A549 (cell line): ENCODE measurements at regions of chr2 and their contacts with region 1.

Region 1: GRCh38 chr2:217713395-217714286 is 289.2 kb downstream of the TNS1 start:
- DNase-seq: peak; percentile 61 to 65
- ATAC-seq: peak; percentile 75 to 92
- H3K4me3 ChIP-seq: no peak overlapping the region
- H3K27ac ChIP-seq: peak overlapping the region; percentile 37 to 73; a peak in 5 of 6 replicates
- H3K4me1 ChIP-seq: peaks cover 6% of the 10 kb centered on the region; the same call in 2 of the 3 replicates
- CTCF ChIP-seq: peak; percentile 92
- EP300 ChIP-seq: no peak
- POLR2A ChIP-seq: no peak
- RAD21 ChIP-seq: peak; percentile 98 to 99

Region 2: DNA sequence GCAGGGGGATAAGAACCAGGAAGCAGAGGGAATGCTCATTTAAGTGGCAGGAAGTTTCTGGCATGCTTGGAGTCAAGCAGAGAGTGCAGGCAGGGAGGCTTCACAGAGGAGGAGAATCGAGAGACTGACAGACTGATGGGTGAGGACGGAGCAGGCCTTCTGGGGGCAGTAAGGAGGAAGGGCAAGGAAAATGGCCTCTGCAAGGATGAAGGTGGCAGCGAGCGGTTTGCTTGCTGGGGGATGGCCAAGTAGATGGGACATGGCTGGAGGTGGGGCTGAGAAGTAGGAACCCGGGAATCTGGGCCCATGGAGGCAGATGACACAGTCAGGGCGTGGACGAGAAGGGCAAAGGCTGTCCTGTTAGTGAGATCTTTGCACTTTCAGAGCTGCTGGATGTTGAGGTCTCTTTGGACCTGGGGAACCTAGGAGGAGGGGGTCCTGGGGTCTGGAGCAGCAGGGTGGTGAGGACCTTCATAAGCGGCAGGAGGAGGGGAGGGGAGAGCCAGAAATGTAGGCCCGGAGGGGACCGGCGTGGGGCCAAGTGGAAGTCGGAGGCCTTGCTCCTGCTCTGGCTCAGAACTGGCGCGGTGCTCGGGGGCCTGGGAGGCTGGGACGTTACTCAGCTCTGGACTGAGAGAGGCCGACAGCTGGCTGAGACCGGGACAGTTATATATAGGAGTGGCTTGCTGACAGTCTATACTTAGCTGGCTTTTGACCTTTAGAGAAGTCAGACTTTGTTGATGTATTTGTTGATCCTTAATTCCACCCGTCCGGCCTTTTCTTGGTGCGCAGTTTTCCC is 1034.2 kb before region 1 on chr2:
- CTCF ChIA-PET with region 1: interaction called, 30 read pairs
- POLR2A ChIA-PET with region 1: no interaction called
- DNase-seq: no peak
- ATAC-seq: no peak
- H3K4me3 ChIP-seq: no peak overlapping the region
- H3K27ac ChIP-seq: no peak overlapping the region
- H3K4me1 ChIP-seq: peaks cover 19% of the 10 kb centered on the region; the same call in 2 of the 3 replicates
- CTCF ChIP-seq: no peak
- EP300 ChIP-seq: no peak
- POLR2A ChIP-seq: no peak
- RAD21 ChIP-seq: no peak

Region 3: GRCh38 chr2:216687646-216688045 is 1026.0 kb before region 1 on chr2:
- CTCF ChIA-PET with region 1: interaction called, 30 read pairs
- POLR2A ChIA-PET with region 1: no interaction called
- DNase-seq: peak; percentile 38 to 47
- ATAC-seq: peak in 1 of 2 experiments; percentile 61; a peak in 3 of 6 replicates
- H3K4me3 ChIP-seq: no peak overlapping the region
- H3K27ac ChIP-seq: no peak overlapping the region
- H3K4me1 ChIP-seq: peaks cover 16% of the 10 kb centered on the region; the same call in 2 of the 3 replicates
- CTCF ChIP-seq: peak; percentile 37; the same call in 2 of the 3 replicates
- EP300 ChIP-seq: no peak
- POLR2A ChIP-seq: no peak
- RAD21 ChIP-seq: peak; percentile 17 to 25; a peak in 1 of 5 replicates

Region 4: DNA sequence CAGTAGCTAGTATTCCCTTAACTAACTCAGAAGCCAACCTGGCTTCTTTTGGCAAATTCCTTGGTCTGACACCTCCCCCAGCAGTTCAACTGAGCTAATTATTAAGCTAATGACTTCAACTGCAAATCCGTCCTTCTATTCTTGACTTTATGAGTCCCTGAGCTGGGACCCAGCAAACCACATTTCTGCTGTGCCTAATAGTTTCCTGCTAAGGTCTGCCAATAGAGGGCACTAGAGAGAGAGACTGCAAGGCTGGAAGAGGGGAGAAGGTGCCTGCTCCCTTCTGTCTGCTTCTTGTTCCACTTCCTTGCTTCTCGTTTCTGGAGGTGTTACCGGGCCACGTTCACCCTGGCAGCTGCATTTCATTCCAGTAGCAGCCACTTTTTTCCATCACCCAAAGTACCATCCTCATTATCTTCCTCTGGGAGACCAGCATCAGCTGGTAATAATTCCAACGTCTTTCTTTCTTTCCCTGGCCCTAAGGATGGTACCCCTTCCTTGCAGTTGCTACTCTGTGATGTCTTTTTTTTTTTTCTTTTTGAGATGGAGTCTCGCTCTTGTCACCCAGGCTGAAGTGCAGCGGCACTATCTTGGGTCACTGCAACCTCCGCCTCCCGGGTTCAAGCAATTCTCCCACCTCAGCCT is 62.8 kb before region 1 on chr2:
- CTCF ChIA-PET with region 1: interaction called, 10 read pairs
- POLR2A ChIA-PET with region 1: no interaction called
- DNase-seq: peak; percentile 48 to 76
- ATAC-seq: peak; percentile 51 to 82; a peak in 4 of 6 replicates
- H3K4me3 ChIP-seq: no peak overlapping the region
- H3K27ac ChIP-seq: no peak overlapping the region; a peak in 1 of 6 replicates
- H3K4me1 ChIP-seq: peaks cover 27% of the 10 kb centered on the region
- CTCF ChIP-seq: peak; percentile 67
- EP300 ChIP-seq: no peak
- POLR2A ChIP-seq: no peak
- RAD21 ChIP-seq: peak; percentile 48 to 65; a peak in 4 of 5 replicates

Region 5: DNA sequence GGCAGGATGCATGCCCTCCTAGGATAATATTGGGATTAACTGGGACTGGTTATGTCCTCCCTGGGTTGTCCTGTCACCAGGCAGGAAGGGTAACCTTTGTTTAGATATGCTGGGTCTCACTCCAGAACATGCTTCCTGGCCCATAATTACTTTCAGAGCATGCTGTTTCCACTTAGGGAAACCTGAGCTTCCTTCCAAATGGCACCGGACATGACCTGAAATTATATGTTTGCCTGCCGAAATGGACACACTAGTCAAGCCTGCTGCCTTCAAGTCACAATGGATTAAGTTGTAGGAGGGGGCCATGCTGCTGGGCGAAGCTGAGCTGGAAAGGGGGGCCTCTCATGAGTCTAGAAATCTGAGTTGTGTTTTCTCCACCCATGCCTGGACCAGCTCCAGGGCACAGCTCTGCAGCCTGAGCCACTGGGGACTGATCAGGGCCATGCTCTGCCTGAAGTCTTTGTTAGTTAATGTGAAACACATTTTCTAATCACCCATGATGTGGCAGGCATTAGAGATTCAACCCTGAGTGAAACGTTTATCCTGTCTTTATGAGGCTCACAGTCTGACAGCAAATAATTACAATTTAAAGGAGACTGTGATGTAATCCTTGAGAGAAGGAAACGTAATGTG is 15.9 kb after region 1 on chr2:
- CTCF ChIA-PET with region 1: interaction called, 14 read pairs
- POLR2A ChIA-PET with region 1: no interaction called
- DNase-seq: no peak
- ATAC-seq: no peak
- H3K4me3 ChIP-seq: no peak overlapping the region
- H3K27ac ChIP-seq: no peak overlapping the region
- H3K4me1 ChIP-seq: no peaks in the 10 kb centered on the region
- CTCF ChIP-seq: no peak
- EP300 ChIP-seq: no peak
- POLR2A ChIP-seq: no peak
- RAD21 ChIP-seq: no peak